ENCODE measurements at regions of chr11 and their contacts with region 1.

Region 1: DNA sequence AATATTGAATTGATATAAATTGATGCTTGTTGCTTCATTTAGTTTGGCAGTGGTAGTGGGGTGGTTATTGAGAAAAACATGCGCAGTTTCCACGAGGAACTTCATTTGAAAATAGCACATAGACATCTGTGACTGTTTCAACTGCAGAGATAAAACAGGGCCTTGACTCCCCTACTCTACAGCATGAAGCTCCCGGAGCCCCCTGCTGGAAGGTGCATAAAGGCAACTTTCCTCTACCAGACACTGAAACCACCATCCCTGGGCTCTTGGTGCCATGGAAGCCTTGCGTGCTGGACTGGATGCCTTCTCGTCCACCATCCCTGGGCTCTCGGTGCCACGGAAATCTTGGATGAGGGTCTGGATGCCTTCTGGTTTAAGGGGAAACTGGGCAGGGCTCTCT is 195.9 kb downstream of the CSNK2A3 start:
- H3K4me3 ChIP-seq: no peak overlapping the region
- H3K27ac ChIP-seq: no peak overlapping the region
- H3K4me1 ChIP-seq: no peaks in the 10 kb centered on the region
- CTCF ChIP-seq: no peak

Region 2: DNA sequence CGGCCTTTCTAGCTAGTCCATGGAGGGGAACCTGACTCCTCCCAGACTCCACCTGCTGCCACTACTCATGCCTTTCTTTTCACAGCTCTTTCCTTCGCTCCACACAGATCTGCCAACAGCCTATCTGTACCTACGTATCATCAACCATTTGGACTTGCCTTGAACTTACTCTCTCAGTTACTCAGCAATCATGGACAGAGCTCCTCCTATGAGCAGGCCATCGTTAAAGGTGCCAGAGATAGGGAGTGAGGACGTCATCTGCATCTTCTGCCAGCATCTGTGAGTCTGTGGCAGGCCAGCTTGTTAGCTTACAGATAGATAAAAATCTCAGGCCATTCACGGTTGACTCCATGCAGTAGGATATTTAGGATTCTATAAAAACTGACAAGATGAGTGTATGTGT is 136.4 kb before region 1 on chr11:
- CTCF ChIA-PET with region 1: no interaction called
- POLR2A ChIA-PET with region 1: no interaction called
- H3K4me3 ChIP-seq: no peak overlapping the region
- H3K27ac ChIP-seq: no peak overlapping the region
- H3K4me1 ChIP-seq: no peaks in the 10 kb centered on the region
- CTCF ChIP-seq: no peak

Region 3: DNA sequence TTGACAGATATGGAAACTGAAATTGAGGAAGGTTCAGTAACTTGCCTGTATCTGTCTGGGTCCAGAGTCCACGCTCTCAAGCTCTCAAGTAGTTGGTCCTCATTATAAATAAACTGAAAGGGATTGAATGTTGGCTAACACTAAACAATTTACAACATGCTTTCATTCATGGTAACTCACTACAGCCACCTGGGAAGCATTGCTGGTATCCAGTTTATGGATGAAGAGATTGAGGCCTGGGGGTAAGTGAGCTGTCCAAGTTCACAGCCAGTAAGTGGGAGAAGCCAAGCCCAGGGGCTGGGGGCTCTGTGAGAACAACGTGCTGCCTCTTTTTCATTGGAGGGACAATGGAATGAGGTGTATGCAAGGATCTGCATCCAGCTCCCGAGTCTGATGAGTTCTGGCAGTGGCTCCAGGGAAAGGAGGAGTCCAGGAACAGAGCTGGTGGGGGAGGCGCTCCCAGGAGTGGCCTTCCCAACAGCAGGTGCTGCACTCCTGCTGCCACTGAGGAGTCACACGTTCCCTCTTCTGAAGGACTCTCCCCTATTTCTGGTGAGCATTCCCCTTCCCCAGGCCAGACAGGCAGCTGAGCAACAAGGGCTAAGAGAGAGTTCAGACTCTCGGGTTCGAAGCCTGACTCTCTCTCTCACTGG is 20.1 kb after region 1 on chr11:
- CTCF ChIA-PET with region 1: interaction called, 13 read pairs
- POLR2A ChIA-PET with region 1: no interaction called
- H3K4me3 ChIP-seq: no peak overlapping the region
- H3K27ac ChIP-seq: no peak overlapping the region
- H3K4me1 ChIP-seq: no peaks in the 10 kb centered on the region
- CTCF ChIP-seq: no peak

Measured in HEK293 (cell line).